Posterior cingulate gyrus (tissue), 11 donors: ENCODE measurements at regions of chr17 and their contacts with region 1.

Region 1: GRCh38 chr17:17416007-17416399 is 60.8 kb upstream of the MED9 start:
- DNase-seq: peak in 1 of 10 donors; percentile 7

Region 2: DNA sequence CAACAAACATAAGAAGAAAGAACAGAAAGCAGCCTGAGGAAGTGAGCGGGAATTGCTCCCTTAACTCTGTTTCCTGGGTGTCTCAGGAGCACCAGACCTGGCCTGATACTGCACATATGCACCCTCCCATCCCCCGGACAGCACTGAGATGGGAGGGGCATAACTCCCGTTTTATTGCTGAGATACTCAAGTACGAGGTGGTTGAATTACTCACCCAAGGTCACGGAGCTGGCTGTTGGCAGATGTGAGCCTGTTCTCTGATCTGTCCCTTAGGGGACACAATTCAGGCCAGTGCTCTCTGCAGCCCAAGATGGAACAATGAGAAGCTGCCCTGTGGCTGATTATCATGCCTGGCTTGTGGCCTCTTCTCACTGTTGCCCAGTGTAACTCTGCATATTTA is 51.7 kb after region 1 on chr17:
- intact Hi-C with region 1: loop called (anchors 10 kb)
- DNase-seq: no peak

Region 3: GRCh38 chr17:17568749-17569195 is 152.8 kb after region 1 on chr17:
- intact Hi-C with region 1: no loop called
- DNase-seq: peak in 9 of 10 donors; percentile 59 to 94 (median 70)